Adrenal gland (tissue), 19 donors: ENCODE measurements at regions of chr11 and their contacts with region 1.

Region 1: GRCh38 chr11:8566613-8567210 is 27.3 kb downstream of the STK33 start:
- DNase-seq: no peak
- H3K4me3 ChIP-seq: no peak overlapping the region
- H3K27ac ChIP-seq: no peak overlapping the region
- H3K4me1 ChIP-seq: peaks cover 0 to 10% of the 10 kb centered on the region in 2 donors
- H3K27me3 ChIP-seq: no peaks in the 10 kb centered on the region
- CTCF ChIP-seq: peak; percentile 53 to 82 (median 72)
- POLR2A ChIP-seq: no peak

Region 2: GRCh38 chr11:8219257-8220021 is 347.3 kb before region 1 on chr11:
- intact Hi-C with region 1: loop called (anchors 2 to 5 kb)
- DNase-seq: peak; percentile 55 to 79 (median 69)
- H3K4me3 ChIP-seq: no peak overlapping the region
- H3K27ac ChIP-seq: no peak overlapping the region
- H3K4me1 ChIP-seq: no peaks in the 10 kb centered on the region
- H3K27me3 ChIP-seq: no peaks in the 10 kb centered on the region
- CTCF ChIP-seq: peak; percentile 42 to 69 (median 52)
- POLR2A ChIP-seq: no peak

Region 3: DNA sequence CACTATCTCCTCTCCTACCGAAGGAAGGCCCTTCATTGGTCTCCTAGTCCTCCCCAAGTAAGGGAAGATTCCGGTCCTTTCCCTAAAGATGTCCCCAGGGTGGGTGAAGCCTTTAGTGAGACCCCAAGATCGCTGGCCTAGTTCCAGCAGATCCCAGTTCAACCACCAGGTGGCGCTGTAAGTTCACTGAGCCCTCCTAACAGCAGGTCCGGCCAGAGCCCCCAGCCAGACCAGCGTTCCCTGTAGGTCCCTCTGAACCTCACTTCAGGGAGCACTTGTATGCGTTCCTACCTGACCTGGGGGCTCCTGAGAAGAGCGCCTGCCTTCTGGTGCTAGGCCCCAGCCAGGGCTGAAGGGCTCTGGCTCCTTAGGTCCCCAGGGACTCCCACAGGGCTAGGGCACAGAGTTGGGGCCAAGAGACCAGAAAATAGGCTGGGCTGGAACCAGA is 341.1 kb before region 1 on chr11:
- intact Hi-C with region 1: loop called (anchors 2 to 5 kb)
- DNase-seq: peak; percentile 50 to 91 (median 78)
- H3K4me3 ChIP-seq: no peak overlapping the region
- H3K27ac ChIP-seq: no peak overlapping the region
- H3K4me1 ChIP-seq: peaks cover 0 to 8% of the 10 kb centered on the region in 2 donors
- H3K27me3 ChIP-seq: no peaks in the 10 kb centered on the region
- CTCF ChIP-seq: peak; percentile 89 to 98 (median 96)
- POLR2A ChIP-seq: no peak

Region 4: GRCh38 chr11:8338138-8338537 is 228.6 kb before region 1 on chr11:
- intact Hi-C with region 1: loop called (anchors 10 kb)
- DNase-seq: peak; percentile 46 to 77 (median 66)
- H3K4me3 ChIP-seq: no peak overlapping the region
- H3K27ac ChIP-seq: no peak overlapping the region
- H3K4me1 ChIP-seq: no peaks in the 10 kb centered on the region
- H3K27me3 ChIP-seq: no peaks in the 10 kb centered on the region
- CTCF ChIP-seq: peak; percentile 55 to 68 (median 62)
- POLR2A ChIP-seq: no peak

Region 5: DNA sequence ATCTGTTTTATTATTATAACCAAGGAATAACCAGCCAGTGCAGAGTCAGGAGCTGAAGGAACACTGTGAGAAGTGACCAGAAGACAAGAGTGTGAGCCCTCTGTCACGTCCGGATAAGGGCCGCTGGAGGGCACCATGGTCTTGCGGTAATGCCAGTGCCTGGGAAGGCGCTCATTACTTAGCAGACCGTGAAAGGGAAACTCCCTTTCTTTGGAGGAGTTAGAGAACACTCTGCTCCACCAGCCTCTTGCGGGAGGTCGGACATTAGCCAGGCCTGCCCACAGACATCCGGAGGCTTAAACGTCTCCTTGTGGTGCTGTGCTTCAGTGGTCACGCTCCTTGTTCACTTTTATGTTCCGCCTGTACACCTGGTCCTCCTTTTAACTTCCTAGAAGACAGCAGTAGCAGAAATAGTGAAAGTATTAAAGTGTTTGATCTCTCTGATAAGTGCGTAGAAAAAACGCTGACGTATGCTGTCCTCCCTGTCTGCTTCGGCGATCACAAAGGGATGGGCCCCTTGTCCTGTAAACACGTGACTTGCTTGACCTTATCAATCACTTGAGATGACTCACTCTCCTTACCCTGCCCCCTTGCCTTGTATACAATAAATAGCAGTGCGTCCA is 182.4 kb before region 1 on chr11:
- intact Hi-C with region 1: loop called in 1 of 2 experiments (anchors 10 kb)
- DNase-seq: peak; percentile 53 to 88 (median 78)
- H3K4me3 ChIP-seq: peak overlapping the region in 1 of 4 donors; percentile 15
- H3K27ac ChIP-seq: peak overlapping the region in 3 of 5 donors; percentile 26 to 77 (median 42)
- H3K4me1 ChIP-seq: peaks cover 4 to 18% of the 10 kb centered on the region in 2 donors
- H3K27me3 ChIP-seq: no peaks in the 10 kb centered on the region
- CTCF ChIP-seq: peak in 5 of 6 experiments; percentile 18 to 58 (median 38)
- POLR2A ChIP-seq: peak in 1 of 2 donors; percentile 58